ENCODE measurements at regions of chrX and their contacts with region 1.

Region 1: DNA sequence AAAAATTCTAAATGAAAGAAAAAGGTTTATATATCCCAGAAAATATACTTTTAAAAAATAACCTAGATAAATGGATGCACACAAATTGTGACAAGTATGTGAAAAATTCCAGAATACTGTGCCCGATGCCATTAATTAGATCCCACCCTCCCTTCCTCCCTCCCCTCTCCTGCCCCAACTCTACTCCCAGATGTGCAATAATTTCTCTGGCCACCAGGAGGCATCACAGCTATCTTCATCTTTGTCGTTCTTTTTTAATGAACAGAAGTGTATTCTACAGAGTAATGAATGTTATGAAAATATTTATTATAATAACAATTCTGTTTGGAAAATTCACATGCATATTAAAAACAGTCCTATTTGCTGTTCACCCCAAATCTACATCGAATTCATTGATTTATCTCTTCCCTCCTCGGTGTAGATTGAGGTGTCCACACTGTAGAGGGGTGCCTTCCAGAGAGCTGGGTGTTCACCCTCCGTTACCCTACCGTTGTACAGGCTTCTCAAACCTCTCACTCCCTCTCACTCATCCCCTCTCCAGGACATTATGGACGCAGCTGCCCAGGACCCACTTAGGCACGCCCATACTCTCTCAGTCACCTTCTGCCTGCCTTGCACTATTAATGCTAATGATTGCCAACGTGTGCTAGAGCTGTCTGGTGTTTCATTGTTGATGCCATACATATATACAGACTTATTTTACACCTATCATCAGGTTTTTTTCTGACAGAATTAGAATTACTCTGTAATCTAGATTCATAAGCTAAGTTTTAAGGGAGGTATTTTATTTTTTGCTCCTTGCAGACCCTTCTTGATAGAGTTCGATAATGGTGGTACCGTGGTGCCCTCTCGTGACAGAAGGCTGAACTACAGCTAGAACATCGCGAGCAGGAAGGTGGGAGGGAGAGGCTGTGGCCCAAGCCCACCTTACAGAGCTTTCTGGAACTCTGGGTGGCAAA is 14.1 kb downstream of the RAB40AL start:
- DNase-seq: peak; percentile 60
- H3K4me3 Mint-ChIP-seq: peak overlapping the region; percentile 59
- H3K27ac Mint-ChIP-seq: no peak overlapping the region
- H3K4me1 Mint-ChIP-seq: peaks cover 3% of the 10 kb centered on the region
- H3K27me3 Mint-ChIP-seq: no peaks in the 10 kb centered on the region

Region 2: DNA sequence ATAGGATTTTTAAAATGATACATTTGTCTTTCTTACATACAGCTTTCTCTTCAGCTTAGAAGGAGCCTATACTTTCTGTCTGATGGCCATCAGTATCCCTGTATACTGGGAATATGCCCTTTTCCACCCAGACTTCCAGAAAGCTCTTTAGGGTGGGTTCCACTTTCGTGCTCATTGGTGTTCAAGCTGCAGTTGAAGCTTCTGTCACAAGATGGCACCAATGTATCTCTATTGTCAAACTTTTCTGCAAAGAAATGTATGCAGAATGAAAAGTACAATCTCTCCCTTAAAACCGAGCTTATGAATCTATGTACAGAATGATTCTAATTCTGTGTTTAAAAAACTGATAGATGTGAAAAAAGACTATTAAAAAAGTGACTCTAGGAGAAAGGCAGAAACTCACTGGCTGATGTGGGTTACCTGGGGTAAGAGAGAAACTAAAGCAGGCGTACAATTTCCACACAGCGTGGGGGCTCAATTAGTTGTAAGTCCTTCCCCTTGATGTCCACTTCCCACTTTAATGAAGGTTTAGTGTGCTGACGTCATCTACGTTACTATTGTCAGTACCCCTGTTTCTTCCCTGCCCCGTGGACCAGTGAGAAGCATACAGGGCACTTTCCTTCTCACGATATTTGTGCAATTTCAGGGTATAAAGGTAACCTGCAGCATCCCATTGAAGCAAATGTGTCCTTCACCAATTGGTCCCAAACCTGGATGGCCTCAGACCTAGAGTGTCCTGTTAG is 883.0 kb before region 1 on chrX:
- CTCF ChIA-PET with region 1: interaction called, 11 read pairs
- POLR2A ChIA-PET with region 1: no interaction called
- intact Hi-C with region 1: no loop called
- DNase-seq: no peak
- H3K4me3 Mint-ChIP-seq: no peak overlapping the region
- H3K27ac Mint-ChIP-seq: no peak overlapping the region
- H3K4me1 Mint-ChIP-seq: no peaks in the 10 kb centered on the region
- H3K27me3 Mint-ChIP-seq: peaks cover 11% of the 10 kb centered on the region

Region 3: GRCh38 chrX:102934624-102935023 is 16.6 kb before region 1 on chrX:
- CTCF ChIA-PET with region 1: interaction called, 41 read pairs
- POLR2A ChIA-PET with region 1: no interaction called
- intact Hi-C with region 1: no loop called
- DNase-seq: peak; percentile 39
- H3K4me3 Mint-ChIP-seq: no peak overlapping the region
- H3K27ac Mint-ChIP-seq: no peak overlapping the region
- H3K4me1 Mint-ChIP-seq: no peaks in the 10 kb centered on the region
- H3K27me3 Mint-ChIP-seq: no peaks in the 10 kb centered on the region

Region 4: DNA sequence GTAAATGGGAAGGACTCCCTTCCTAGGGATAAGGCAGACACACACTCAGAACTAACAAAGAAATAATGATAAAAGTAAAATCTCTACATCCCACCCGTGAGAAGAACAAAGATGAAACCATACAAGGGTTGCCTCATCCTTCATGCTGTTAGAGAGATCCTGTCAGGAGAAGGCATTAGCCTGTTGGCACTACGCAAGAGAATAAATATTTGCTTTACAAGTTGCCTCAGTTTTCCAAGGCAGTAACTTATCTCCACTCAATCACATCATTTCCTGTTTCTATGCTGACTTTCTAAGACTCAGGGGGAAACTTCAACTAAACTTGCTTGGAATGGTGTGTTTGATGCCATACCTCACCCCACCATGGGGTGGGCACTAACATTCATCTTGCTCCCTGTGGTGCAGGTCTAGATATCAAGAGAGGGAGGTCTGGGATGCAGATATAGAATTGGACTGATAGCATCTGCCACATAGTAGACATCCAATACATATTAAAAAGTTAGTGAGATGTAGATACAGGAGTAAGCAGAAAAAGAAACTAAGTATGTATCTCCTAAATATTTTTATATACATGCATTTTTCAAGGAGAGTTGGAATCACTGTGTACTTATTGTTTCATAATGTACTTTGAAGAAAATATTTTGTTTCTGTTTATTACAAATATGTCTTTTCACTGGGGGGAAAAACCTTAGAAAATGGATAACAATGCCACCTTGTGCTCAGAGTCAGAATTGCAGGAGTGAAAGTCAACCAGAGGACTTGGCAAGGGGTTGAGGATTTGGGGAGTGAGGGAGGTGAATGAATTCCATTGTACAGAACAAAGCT is 206.5 kb after region 1 on chrX:
- CTCF ChIA-PET with region 1: interaction called, 12 read pairs
- POLR2A ChIA-PET with region 1: no interaction called
- intact Hi-C with region 1: loop called (anchors 1 kb)
- DNase-seq: no peak
- H3K4me3 Mint-ChIP-seq: no peak overlapping the region
- H3K27ac Mint-ChIP-seq: no peak overlapping the region
- H3K4me1 Mint-ChIP-seq: no peaks in the 10 kb centered on the region
- H3K27me3 Mint-ChIP-seq: no peaks in the 10 kb centered on the region

Region 5: GRCh38 chrX:103175944-103176753 is 225.0 kb after region 1 on chrX:
- CTCF ChIA-PET with region 1: interaction called, 37 read pairs
- POLR2A ChIA-PET with region 1: no interaction called
- intact Hi-C with region 1: loop called (anchors 1 kb)
- DNase-seq: peak; percentile 69
- H3K4me3 Mint-ChIP-seq: peak overlapping the region; percentile 29
- H3K27ac Mint-ChIP-seq: no peak overlapping the region
- H3K4me1 Mint-ChIP-seq: no peaks in the 10 kb centered on the region
- H3K27me3 Mint-ChIP-seq: peaks cover 4% of the 10 kb centered on the region

Region 6: DNA sequence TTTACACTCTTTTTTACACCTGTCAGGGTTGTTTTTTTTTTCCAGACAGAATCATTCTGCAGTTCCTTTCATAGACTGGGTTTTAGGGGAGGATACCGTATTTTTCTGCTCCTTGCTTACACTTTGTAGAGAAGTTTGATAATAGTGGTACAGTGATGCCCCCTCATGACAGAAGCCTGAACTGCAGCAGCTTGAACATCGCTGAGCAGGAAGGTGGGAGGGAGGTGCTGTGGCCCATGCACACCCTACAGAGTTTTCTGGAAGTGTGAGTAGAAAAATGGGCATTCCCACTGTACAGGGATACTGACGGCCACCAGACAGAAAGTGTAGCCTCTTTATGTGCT is 513.6 kb after region 1 on chrX:
- CTCF ChIA-PET with region 1: interaction called, 9 read pairs
- POLR2A ChIA-PET with region 1: no interaction called
- intact Hi-C with region 1: loop called (anchors 1 kb)
- DNase-seq: peak; percentile 83
- H3K4me3 Mint-ChIP-seq: peak overlapping the region; percentile 83
- H3K27ac Mint-ChIP-seq: peak overlapping the region; percentile 58
- H3K4me1 Mint-ChIP-seq: peaks cover 24% of the 10 kb centered on the region
- H3K27me3 Mint-ChIP-seq: no peaks in the 10 kb centered on the region

Measured in activated CD4-positive, alpha-beta memory T cell treated with anti-CD3 and anti-CD28 coated beads for 36 hours (primary cell).